CD8-positive, alpha-beta T cell (primary cell): ENCODE measurements at regions of chr5 and their contacts with region 1.

Region 1: DNA sequence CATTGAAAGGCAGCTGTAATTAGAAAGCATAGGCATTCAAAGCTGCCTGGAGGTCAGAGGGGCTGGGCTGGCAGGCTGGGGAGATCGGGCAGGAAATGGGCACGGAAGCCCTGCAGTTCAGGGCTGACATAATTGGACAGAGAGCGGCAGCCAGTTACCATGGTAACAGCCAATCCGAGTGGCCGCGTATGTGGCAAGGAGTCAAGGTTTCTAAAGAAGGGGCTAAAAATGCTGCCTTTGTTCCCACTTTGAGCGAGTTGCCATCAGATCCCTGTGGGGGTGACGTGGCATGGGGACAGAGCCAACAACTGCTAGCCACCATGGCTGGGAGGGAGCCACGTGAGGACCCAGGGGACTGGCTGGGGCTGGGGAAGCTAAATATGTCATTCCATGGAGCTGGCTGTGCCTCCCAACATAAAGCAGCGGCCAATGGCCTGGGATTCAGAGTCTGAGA is 44.7 kb upstream of the NDFIP1 start:
- DNase-seq: peak in 8 of 9 experiments; percentile 11 to 66 (median 40)
- ATAC-seq: peak; percentile 73
- H3K4me3 ChIP-seq: peak overlapping the region in 1 of 2 experiments; percentile 1
- H3K4me3 Mint-ChIP-seq: peak overlapping the region; percentile 49
- H3K27ac ChIP-seq: no peak overlapping the region
- H3K27ac Mint-ChIP-seq: peak overlapping the region; percentile 63
- H3K4me1 ChIP-seq: peaks cover 13% of the 10 kb centered on the region
- H3K4me1 Mint-ChIP-seq: peaks cover 16% of the 10 kb centered on the region
- H3K27me3 ChIP-seq: no peaks in the 10 kb centered on the region
- H3K27me3 Mint-ChIP-seq: no peaks in the 10 kb centered on the region
- CTCF ChIP-seq: no peak

Region 2: GRCh38 chr5:142115937-142116614 is 52.2 kb after region 1 on chr5:
- CTCF ChIA-PET with region 1: no interaction called
- POLR2A ChIA-PET with region 1: no interaction called
- intact Hi-C with region 1: loop called in 1 of 2 experiments (anchors 1 kb)
- DNase-seq: no peak
- ATAC-seq: no peak
- H3K4me3 ChIP-seq: no peak overlapping the region
- H3K4me3 Mint-ChIP-seq: no peak overlapping the region
- H3K27ac ChIP-seq: no peak overlapping the region
- H3K27ac Mint-ChIP-seq: no peak overlapping the region
- H3K4me1 ChIP-seq: peaks cover 73% of the 10 kb centered on the region
- H3K4me1 Mint-ChIP-seq: peaks cover 74% of the 10 kb centered on the region
- H3K27me3 ChIP-seq: no peaks in the 10 kb centered on the region
- H3K27me3 Mint-ChIP-seq: no peaks in the 10 kb centered on the region
- CTCF ChIP-seq: no peak